ENCODE measurements at regions of chr6 and their contacts with region 1.

Region 1: GRCh38 chr6:4313044-4313686 is 177.8 kb upstream of the ECI2 start:
- DNase-seq: peak; percentile 49
- H3K4me3 Mint-ChIP-seq: peak overlapping the region; percentile 23
- H3K27ac Mint-ChIP-seq: peak overlapping the region; percentile 68
- H3K4me1 Mint-ChIP-seq: peaks cover 16% of the 10 kb centered on the region
- H3K27me3 Mint-ChIP-seq: no peaks in the 10 kb centered on the region
- CTCF ChIP-seq: peak; percentile 19

Region 2: DNA sequence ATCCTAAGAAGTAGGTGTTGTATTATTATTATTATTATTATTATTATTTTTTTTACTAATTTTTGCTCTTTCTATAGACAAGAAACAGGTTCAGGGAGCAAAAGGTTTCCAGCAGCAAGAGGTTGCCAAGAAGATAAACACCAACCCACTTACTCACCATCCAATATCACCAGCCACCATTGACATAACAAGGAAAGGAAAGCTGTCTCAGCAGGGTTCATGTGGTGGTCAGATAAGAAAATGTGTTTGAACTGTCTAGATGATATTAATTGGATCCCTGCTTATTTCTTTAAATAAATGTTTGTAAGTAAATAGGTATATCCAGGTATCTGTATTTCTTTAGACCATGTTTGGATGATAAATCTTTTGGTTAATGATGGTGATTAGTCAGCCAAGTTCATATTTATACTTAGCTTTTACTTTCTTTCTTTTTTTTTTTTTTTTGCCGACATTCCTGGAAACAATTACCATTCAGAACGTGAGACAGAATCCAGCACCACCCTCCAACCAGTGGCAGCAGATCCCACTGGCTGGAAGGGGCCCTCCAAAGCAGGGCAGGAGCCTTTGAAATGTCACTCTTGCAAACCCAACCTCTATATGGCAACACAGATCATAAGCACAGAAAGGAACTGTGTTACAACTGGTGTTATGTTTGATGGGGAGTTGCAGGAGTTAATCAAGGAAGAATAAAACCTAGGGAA is 38.6 kb before region 1 on chr6:
- CTCF ChIA-PET with region 1: no interaction called
- intact Hi-C with region 1: no loop called
- DNase-seq: no peak
- H3K4me3 Mint-ChIP-seq: no peak overlapping the region
- H3K27ac Mint-ChIP-seq: no peak overlapping the region
- H3K4me1 Mint-ChIP-seq: peaks cover 9% of the 10 kb centered on the region
- H3K27me3 Mint-ChIP-seq: no peaks in the 10 kb centered on the region
- CTCF ChIP-seq: no peak

Region 3: GRCh38 chr6:4291453-4292403 is 21.4 kb before region 1 on chr6:
- CTCF ChIA-PET with region 1: no interaction called
- intact Hi-C with region 1: no loop called
- DNase-seq: peak; percentile 12
- H3K4me3 Mint-ChIP-seq: no peak overlapping the region
- H3K27ac Mint-ChIP-seq: no peak overlapping the region
- H3K4me1 Mint-ChIP-seq: no peaks in the 10 kb centered on the region
- H3K27me3 Mint-ChIP-seq: peaks cover 16% of the 10 kb centered on the region
- CTCF ChIP-seq: no peak

Region 4: GRCh38 chr6:4358414-4359114 is 45.4 kb after region 1 on chr6:
- CTCF ChIA-PET with region 1: no interaction called
- intact Hi-C with region 1: loop called (anchors 5 kb)
- DNase-seq: peak; percentile 86
- H3K4me3 Mint-ChIP-seq: peak overlapping the region; percentile 19
- H3K27ac Mint-ChIP-seq: peak overlapping the region; percentile 94
- H3K4me1 Mint-ChIP-seq: peaks cover 31% of the 10 kb centered on the region
- H3K27me3 Mint-ChIP-seq: no peaks in the 10 kb centered on the region
- CTCF ChIP-seq: no peak

Region 5: DNA sequence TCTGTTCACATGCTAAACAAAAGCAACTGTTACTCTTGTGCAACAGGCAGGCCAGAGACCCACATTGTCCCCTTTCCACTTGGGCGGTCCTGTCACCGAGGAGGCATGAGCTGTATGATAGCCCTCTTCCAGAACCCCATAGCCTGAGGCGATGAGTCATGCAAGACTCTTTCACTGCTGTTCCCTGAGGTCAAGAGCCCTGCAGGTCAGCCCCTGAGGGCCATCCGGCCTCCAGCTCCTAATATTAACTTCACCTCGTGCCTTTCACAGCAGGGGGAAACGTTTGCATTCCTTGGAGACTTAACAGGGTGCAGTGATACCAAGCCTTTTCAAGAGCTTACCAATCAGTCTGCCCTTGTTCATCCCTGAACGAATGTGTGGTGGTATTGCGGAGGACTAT is 75.5 kb after region 1 on chr6:
- CTCF ChIA-PET with region 1: no interaction called
- intact Hi-C with region 1: no loop called
- DNase-seq: no peak
- H3K4me3 Mint-ChIP-seq: no peak overlapping the region
- H3K27ac Mint-ChIP-seq: no peak overlapping the region
- H3K4me1 Mint-ChIP-seq: no peaks in the 10 kb centered on the region
- H3K27me3 Mint-ChIP-seq: no peaks in the 10 kb centered on the region
- CTCF ChIP-seq: no peak

Region 6: GRCh38 chr6:4775584-4776494 is 462.7 kb after region 1 on chr6 and contains the start of gene CDYL:
- CTCF ChIA-PET with region 1: interaction called, 3 read pairs
- intact Hi-C with region 1: loop called (anchors 10 kb)
- DNase-seq: peak; percentile 87
- H3K4me3 Mint-ChIP-seq: peak within 1 kb of the TSS; percentile 98
- H3K27ac Mint-ChIP-seq: peak within 1 kb of the TSS; percentile 88
- H3K4me1 Mint-ChIP-seq: peaks cover 29% of the 10 kb centered on the region
- H3K27me3 Mint-ChIP-seq: peaks cover 21% of the 10 kb centered on the region
- CTCF ChIP-seq: no peak
- total RNA-seq, gene CDYL: 45.2 and 48.9 TPM in 2 replicates

Region 7: DNA sequence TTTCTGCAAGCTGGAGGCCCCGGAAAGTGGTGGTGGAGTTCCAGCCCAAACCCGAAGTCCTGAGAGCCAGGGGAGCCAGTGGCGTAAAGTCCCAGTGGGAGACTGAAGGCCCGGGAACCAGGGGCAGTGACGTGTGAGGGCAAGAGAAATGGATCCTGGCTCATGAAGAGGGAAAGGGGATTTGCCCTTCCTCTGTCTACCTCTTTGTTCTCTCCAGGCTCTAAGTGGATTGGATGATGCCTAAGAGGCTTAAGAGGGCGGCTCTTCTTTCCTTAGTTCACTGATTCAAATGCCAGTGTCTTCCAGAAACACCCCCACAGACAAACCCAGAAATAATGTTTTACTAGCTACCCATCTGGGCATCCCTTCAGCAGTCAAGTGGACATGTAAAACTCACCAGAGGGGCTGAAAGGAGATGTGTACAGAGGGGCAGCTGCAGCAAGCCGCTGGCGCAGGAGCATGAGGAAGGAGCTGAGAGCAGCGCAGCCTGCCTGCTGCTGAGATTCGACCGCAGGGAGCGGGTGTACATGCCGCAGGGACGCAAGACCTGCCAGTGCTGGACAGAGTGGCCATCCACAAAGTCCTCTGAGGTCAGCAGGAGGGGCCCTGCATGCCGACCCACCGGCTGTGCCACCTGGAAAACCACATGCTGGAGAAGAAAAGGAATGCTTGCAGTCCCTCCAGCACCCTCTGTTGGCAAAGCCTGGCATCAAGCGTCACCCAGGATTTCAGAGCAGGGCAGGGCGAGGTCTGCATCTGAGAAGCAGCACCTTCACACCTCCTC is 492.6 kb after region 1 on chr6:
- CTCF ChIA-PET with region 1: no interaction called
- intact Hi-C with region 1: loop called (anchors 10 kb)
- DNase-seq: peak; percentile 62
- H3K4me3 Mint-ChIP-seq: no peak overlapping the region
- H3K27ac Mint-ChIP-seq: no peak overlapping the region
- H3K4me1 Mint-ChIP-seq: peaks cover 10% of the 10 kb centered on the region
- H3K27me3 Mint-ChIP-seq: no peaks in the 10 kb centered on the region
- CTCF ChIP-seq: peak; percentile 55

Region 8: GRCh38 chr6:4936681-4937041 is 623.5 kb after region 1 on chr6:
- CTCF ChIA-PET with region 1: interaction called, 3 read pairs
- intact Hi-C with region 1: loop called (anchors 1 kb)
- DNase-seq: no peak
- H3K4me3 Mint-ChIP-seq: no peak overlapping the region
- H3K27ac Mint-ChIP-seq: no peak overlapping the region
- H3K4me1 Mint-ChIP-seq: peaks cover 15% of the 10 kb centered on the region
- H3K27me3 Mint-ChIP-seq: no peaks in the 10 kb centered on the region
- CTCF ChIP-seq: peak; percentile 33